CD8-positive, alpha-beta memory T cell (primary cell): ENCODE measurements at regions of chr2 and their contacts with region 1.

Region 1: GRCh38 chr2:27050281-27050995 is 1.0 kb upstream of the AGBL5 start:
- DNase-seq: peak; percentile 82 to 95 (median 92)
- H3K4me3 ChIP-seq: peak overlapping the region; percentile 88
- H3K4me3 Mint-ChIP-seq: peak overlapping the region; percentile 95 to 100 (median 99)
- H3K27ac ChIP-seq: peak overlapping the region; percentile 75
- H3K27ac Mint-ChIP-seq: peak overlapping the region; percentile 97 to 100 (median 99)
- H3K4me1 ChIP-seq: peaks cover 14% of the 10 kb centered on the region
- H3K4me1 Mint-ChIP-seq: peaks cover 23 to 26% (median 24%) of the 10 kb centered on the region in 3 donors
- H3K27me3 ChIP-seq: no peaks in the 10 kb centered on the region
- H3K27me3 Mint-ChIP-seq: peaks cover 3 to 17% of the 10 kb centered on the region in 2 donors

Region 2: DNA sequence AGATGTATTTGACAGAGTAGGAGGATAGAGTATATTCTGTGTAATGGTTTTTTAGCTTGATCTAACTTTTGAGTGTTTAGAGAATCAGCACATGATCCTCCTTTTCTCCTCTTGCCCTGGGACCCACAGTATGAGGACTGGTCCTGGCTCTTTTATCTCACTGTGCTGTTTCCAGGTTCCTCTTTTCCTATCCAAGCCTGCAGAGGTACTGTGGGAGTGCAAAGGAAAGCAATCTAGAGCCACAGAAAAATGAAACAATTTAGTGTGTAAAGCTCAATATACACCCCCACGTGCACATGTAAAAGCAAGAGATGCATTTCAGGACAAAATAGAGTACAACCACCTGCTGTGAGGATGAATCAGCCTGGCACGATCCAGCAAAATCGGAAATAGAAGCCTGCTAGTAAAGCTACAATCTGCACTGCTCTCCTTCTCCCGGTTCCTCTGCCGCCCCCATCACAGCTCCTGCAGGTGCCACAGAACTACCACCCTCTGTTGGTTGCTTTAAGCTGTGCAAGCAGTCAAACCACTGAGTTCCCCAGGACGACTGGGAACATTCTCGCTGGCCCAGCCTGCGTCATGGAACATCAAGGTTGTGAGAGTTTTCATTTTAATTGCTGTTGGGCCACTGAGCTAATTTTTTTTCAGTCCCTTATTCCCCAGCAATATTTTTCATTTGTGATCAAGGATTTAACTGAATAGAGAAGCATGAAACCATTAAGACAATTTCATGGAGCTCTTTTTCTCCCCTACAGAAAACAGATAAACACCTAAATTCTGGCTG is 127.8 kb before region 1 on chr2:
- CTCF ChIA-PET with region 1: no interaction called
- POLR2A ChIA-PET with region 1: no interaction called
- DNase-seq: peak in 2 of 5 donors; percentile 15 to 28
- H3K4me3 ChIP-seq: no peak overlapping the region
- H3K4me3 Mint-ChIP-seq: no peak overlapping the region
- H3K27ac ChIP-seq: no peak overlapping the region
- H3K27ac Mint-ChIP-seq: peak overlapping the region in 1 of 8 donors; percentile 25
- H3K4me1 ChIP-seq: no peaks in the 10 kb centered on the region
- H3K4me1 Mint-ChIP-seq: peaks cover 0 to 6% (median 5%) of the 10 kb centered on the region in 3 donors
- H3K27me3 ChIP-seq: no peaks in the 10 kb centered on the region
- H3K27me3 Mint-ChIP-seq: peaks cover 12 to 33% of the 10 kb centered on the region in 2 donors

Region 3: DNA sequence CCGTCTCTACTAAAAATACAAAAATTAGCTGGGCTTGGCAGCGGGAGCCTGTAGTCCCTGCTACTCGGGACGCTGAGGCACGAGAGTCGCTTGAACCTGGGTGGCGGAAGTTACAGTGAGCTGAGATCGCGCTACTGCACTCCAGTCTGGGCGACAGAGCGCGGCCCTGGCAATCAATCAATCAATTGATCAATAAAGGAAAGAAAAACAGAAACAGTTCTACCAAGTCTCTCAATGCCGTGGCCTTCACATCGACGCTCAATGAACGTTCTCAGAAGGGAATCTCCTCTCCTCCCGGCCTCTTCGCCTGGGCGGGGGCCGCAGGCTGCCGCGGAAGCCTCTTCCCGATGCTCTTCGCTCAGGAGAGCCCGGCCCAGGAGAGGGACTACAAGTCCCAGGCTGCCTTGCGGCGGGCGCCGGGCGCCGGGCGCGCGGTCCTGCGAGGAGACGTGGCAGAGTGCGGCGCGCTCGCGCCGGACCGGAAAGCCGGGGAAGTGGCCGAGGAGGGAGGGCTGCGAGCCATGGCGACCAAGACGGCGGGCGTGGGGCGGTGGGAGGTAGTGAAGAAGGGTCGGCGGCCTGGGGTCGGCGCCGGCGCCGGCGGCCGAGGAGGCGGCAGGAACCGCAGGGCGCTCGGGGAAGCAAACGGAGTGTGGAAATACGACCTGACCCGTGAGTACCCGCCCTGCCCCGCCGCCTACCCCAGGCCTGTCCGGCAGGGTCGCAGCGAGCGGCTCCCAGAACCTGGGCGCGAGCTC is 17.8 kb before region 1 on chr2 and contains the start of gene TMEM214:
- CTCF ChIA-PET with region 1: interaction called, 9 read pairs
- POLR2A ChIA-PET with region 1: interaction called, 15 read pairs
- DNase-seq: peak; percentile 68 to 84 (median 70)
- H3K4me3 ChIP-seq: peak within 1 kb of the TSS; percentile 96
- H3K4me3 Mint-ChIP-seq: peak within 1 kb of the TSS; percentile 92 to 99 (median 94)
- H3K27ac ChIP-seq: peak within 1 kb of the TSS; percentile 88
- H3K27ac Mint-ChIP-seq: peak within 1 kb of the TSS; percentile 69 to 95 (median 93)
- H3K4me1 ChIP-seq: peaks cover 11% of the 10 kb centered on the region
- H3K4me1 Mint-ChIP-seq: peaks cover 29 to 65% (median 58%) of the 10 kb centered on the region in 3 donors
- H3K27me3 ChIP-seq: no peaks in the 10 kb centered on the region
- H3K27me3 Mint-ChIP-seq: no peaks in the 10 kb centered on the region
- total RNA-seq, gene TMEM214: 67.6 to 71.7 TPM

Region 4: GRCh38 chr2:27071277-27071989 is 21.0 kb after region 1 on chr2 and contains the start of gene OST4:
- CTCF ChIA-PET with region 1: interaction called, 11 read pairs
- POLR2A ChIA-PET with region 1: interaction called, 58 read pairs
- DNase-seq: peak; percentile 85 to 89 (median 88)
- H3K4me3 ChIP-seq: peak within 1 kb of the TSS; percentile 82
- H3K4me3 Mint-ChIP-seq: peak within 1 kb of the TSS; percentile 91 to 98 (median 97)
- H3K27ac ChIP-seq: peak within 1 kb of the TSS; percentile 96
- H3K27ac Mint-ChIP-seq: peak within 1 kb of the TSS; percentile 88 to 99 (median 98)
- H3K4me1 ChIP-seq: peaks cover 44% of the 10 kb centered on the region
- H3K4me1 Mint-ChIP-seq: peaks cover 58 to 82% (median 75%) of the 10 kb centered on the region in 3 donors
- H3K27me3 ChIP-seq: no peaks in the 10 kb centered on the region
- H3K27me3 Mint-ChIP-seq: no peaks in the 10 kb centered on the region
- total RNA-seq, gene OST4: 346 to 353 TPM

Region 5: DNA sequence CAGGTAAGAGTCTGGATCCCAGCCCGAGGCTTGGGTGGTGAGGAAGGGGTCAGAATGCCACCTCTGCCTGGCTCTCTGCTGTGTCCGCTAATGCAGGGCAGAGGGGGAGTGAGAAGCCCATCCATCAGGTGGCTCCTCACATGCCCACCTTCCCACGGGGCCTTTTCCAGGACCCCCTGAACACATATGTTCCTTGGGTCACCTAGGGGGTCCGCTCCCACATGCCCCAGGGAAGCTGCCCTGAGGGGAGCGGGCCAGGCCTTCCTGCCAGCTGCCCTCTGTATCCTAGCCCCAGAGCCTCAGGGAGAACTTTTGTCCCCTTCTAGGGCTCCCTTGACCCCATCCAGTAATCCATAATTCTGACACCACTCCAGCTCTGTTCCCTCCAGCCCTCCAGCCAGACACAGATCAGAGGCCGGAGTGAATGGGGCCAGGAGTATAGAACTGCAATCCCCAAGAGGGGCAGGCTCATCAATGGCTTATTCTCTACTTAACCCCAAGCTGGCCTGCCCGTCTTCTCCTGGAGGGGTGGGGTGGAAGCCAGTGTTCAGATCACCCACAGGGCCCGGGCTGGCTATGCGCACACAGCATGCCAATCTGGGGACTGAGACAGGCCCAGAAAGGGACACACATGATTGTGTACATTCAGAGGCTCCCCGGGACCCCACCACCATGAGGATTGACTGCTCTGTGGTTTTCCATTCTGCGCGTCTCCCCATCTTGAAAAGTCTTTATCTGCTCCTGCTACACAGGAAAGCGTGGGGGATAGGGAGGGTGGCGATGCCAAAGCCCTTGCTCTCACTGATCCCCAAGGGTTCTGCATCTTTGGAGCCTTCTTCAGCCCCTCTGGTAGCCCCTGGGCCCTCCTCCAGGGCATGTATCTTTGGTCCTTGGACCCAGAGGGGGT is 29.0 kb after region 1 on chr2:
- CTCF ChIA-PET with region 1: interaction called, 15 read pairs
- POLR2A ChIA-PET with region 1: interaction called, 24 read pairs
- DNase-seq: no peak
- H3K4me3 ChIP-seq: no peak overlapping the region
- H3K4me3 Mint-ChIP-seq: peak overlapping the region in 1 of 7 donors; percentile 25
- H3K27ac ChIP-seq: no peak overlapping the region
- H3K27ac Mint-ChIP-seq: peak overlapping the region in 2 of 8 donors; percentile 48 to 66
- H3K4me1 ChIP-seq: peaks cover 43% of the 10 kb centered on the region
- H3K4me1 Mint-ChIP-seq: peaks cover 33 to 38% (median 33%) of the 10 kb centered on the region in 3 donors
- H3K27me3 ChIP-seq: no peaks in the 10 kb centered on the region
- H3K27me3 Mint-ChIP-seq: peaks cover 0 to 2% of the 10 kb centered on the region in 2 donors

Region 6: DNA sequence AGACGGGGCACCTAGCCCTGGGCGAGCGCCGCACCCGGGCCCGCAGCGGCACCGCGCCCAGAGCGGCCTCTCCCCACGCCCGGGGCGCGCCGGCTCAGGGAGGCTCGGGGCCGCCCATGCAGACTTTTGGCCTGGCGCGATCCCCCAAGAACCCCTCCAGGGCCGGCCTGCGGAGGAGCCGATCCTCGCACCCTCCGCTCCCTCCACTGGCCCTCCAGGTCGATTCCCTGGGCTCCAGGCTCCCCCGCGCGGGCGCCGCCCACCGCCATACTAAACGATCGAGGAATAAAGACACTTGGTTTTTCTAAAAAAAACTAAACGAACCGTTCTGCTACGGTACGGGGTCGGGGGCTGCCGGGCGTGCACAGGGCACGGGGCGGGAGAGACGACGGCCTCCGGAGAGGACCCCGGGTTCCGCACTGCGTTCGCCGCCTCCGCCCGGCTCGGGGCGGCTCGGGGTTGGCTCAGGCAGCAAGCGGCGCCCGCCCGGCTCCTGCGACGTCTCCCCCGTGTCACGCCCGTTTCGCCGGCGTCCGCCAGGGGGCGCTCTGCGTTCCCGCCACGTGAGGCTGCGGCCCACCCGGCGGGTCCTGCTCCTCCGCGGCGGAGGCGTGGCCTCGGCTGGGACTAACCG is 35.8 kb after region 1 on chr2:
- CTCF ChIA-PET with region 1: interaction called, 15 read pairs
- POLR2A ChIA-PET with region 1: interaction called, 24 read pairs
- DNase-seq: peak; percentile 97 to 99 (median 97)
- H3K4me3 ChIP-seq: peak overlapping the region; percentile 60
- H3K4me3 Mint-ChIP-seq: peak overlapping the region; percentile 79 to 94 (median 82)
- H3K27ac ChIP-seq: peak overlapping the region; percentile 75
- H3K27ac Mint-ChIP-seq: peak overlapping the region; percentile 46 to 94 (median 73)
- H3K4me1 ChIP-seq: peaks cover 32% of the 10 kb centered on the region
- H3K4me1 Mint-ChIP-seq: peaks cover 20 to 25% (median 24%) of the 10 kb centered on the region in 3 donors
- H3K27me3 ChIP-seq: no peaks in the 10 kb centered on the region
- H3K27me3 Mint-ChIP-seq: no peaks in the 10 kb centered on the region

Region 7: GRCh38 chr2:27174316-27175040 is 124.0 kb after region 1 on chr2:
- CTCF ChIA-PET with region 1: no interaction called
- POLR2A ChIA-PET with region 1: no interaction called
- DNase-seq: no peak
- H3K4me3 ChIP-seq: no peak overlapping the region
- H3K4me3 Mint-ChIP-seq: no peak overlapping the region
- H3K27ac ChIP-seq: no peak overlapping the region
- H3K27ac Mint-ChIP-seq: no peak overlapping the region
- H3K4me1 ChIP-seq: peaks cover 5% of the 10 kb centered on the region
- H3K4me1 Mint-ChIP-seq: peaks cover 2 to 7% (median 4%) of the 10 kb centered on the region in 3 donors
- H3K27me3 ChIP-seq: peaks cover 12% of the 10 kb centered on the region
- H3K27me3 Mint-ChIP-seq: peaks cover 16 to 30% of the 10 kb centered on the region in 2 donors